ENCODE measurements at regions of chr1 and their contacts with region 1.

Region 1: GRCh38 chr1:203038891-203039608 is 12.8 kb downstream of the PPFIA4 start:
- DNase-seq: peak; percentile 72
- ATAC-seq: peak; percentile 82
- H3K4me3 Mint-ChIP-seq: no peak overlapping the region
- H3K27ac Mint-ChIP-seq: no peak overlapping the region
- H3K4me1 Mint-ChIP-seq: peaks cover 13% of the 10 kb centered on the region
- H3K27me3 Mint-ChIP-seq: no peaks in the 10 kb centered on the region

Region 2: GRCh38 chr1:203026031-203026989 is 12.7 kb before region 1 on chr1 and contains the start of gene PPFIA4:
- CTCF ChIA-PET with region 1: interaction called, 48 read pairs
- DNase-seq: peak; percentile 90
- ATAC-seq: peak; percentile 95
- H3K4me3 Mint-ChIP-seq: peak within 1 kb of the TSS; percentile 70
- H3K27ac Mint-ChIP-seq: peak within 1 kb of the TSS; percentile 54
- H3K4me1 Mint-ChIP-seq: peaks cover 22% of the 10 kb centered on the region
- H3K27me3 Mint-ChIP-seq: peaks cover 9% of the 10 kb centered on the region
- total RNA-seq, gene PPFIA4: 4.6 to 17.9 TPM

Region 3: DNA sequence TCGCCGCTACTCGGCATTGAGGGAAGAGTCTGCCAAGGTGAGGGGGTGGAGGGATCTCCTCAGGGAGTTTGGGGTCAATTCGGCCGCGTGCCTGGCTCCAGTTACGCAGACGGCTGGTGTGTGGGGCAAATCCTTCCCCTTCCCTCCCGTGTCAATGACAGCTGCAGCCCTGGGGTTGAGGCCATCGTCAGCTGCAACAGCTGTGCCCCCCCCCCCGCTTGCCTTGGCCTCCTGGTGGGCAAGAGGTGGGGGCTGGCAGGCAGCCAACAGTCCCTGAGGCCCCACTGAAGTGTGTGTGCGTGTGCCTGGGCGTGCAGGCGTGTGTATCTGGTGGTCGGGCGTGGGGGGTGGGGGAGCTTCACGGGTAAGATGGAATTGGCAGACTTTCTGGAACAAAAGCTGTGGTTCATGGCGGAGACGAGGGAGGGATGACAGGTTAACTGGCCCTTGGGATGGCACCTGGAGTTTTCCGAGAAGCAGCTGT is 12.8 kb after region 1 on chr1:
- CTCF ChIA-PET with region 1: interaction called, 22 read pairs
- DNase-seq: no peak
- ATAC-seq: no peak
- H3K4me3 Mint-ChIP-seq: no peak overlapping the region
- H3K27ac Mint-ChIP-seq: no peak overlapping the region
- H3K4me1 Mint-ChIP-seq: peaks cover 3% of the 10 kb centered on the region
- H3K27me3 Mint-ChIP-seq: peaks cover 8% of the 10 kb centered on the region

Region 4: DNA sequence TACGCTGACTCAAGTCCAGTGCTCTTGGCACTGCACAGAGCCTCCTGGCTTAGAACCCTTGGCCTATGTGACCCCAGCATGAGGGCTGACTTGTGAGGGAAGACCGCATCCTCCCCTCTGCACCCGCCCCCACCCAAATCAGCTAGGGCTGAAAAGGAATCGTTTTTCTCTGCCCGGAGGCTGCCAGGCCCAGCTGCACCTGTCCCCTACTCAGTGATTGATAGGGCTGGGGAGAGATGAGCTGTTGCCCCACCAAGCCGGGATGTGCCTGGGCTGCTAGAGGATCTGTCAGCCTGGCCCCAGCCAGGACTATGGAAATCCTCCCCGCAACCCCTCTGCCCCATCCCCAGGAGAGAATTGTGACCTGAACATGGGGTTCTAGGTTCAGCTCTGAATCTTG is 26.1 kb after region 1 on chr1:
- CTCF ChIA-PET with region 1: interaction called, 17 read pairs
- DNase-seq: no peak
- ATAC-seq: no peak
- H3K4me3 Mint-ChIP-seq: no peak overlapping the region
- H3K27ac Mint-ChIP-seq: no peak overlapping the region
- H3K4me1 Mint-ChIP-seq: no peaks in the 10 kb centered on the region
- H3K27me3 Mint-ChIP-seq: no peaks in the 10 kb centered on the region

Region 5: GRCh38 chr1:203090421-203091387 is 51.7 kb after region 1 on chr1:
- CTCF ChIA-PET with region 1: no interaction called
- DNase-seq: peak; percentile 15
- ATAC-seq: no peak
- H3K4me3 Mint-ChIP-seq: no peak overlapping the region
- H3K27ac Mint-ChIP-seq: no peak overlapping the region
- H3K4me1 Mint-ChIP-seq: no peaks in the 10 kb centered on the region
- H3K27me3 Mint-ChIP-seq: peaks cover 29% of the 10 kb centered on the region

Region 6: GRCh38 chr1:203172128-203173010 is 133.3 kb after region 1 on chr1:
- CTCF ChIA-PET with region 1: interaction called, 74 read pairs
- DNase-seq: peak; percentile 62
- ATAC-seq: peak; percentile 77
- H3K4me3 Mint-ChIP-seq: no peak overlapping the region
- H3K27ac Mint-ChIP-seq: no peak overlapping the region
- H3K4me1 Mint-ChIP-seq: no peaks in the 10 kb centered on the region
- H3K27me3 Mint-ChIP-seq: peaks cover 3% of the 10 kb centered on the region

Region 7: GRCh38 chr1:203216274-203217138 is 177.5 kb after region 1 on chr1:
- CTCF ChIA-PET with region 1: interaction called, 106 read pairs
- DNase-seq: peak; percentile 66
- ATAC-seq: peak; percentile 70
- H3K4me3 Mint-ChIP-seq: no peak overlapping the region
- H3K27ac Mint-ChIP-seq: no peak overlapping the region
- H3K4me1 Mint-ChIP-seq: no peaks in the 10 kb centered on the region
- H3K27me3 Mint-ChIP-seq: peaks cover 20% of the 10 kb centered on the region

Measured in activated CD8-positive, alpha-beta memory T cell treated with anti-CD3 and anti-CD28 coated beads, Interleukin-2, amount 10 ng/mL, durations not matched to agents 7 days and 5 days (primary cell).